ENCODE measurements at regions of chr12 and their contacts with region 1.

Region 1: DNA sequence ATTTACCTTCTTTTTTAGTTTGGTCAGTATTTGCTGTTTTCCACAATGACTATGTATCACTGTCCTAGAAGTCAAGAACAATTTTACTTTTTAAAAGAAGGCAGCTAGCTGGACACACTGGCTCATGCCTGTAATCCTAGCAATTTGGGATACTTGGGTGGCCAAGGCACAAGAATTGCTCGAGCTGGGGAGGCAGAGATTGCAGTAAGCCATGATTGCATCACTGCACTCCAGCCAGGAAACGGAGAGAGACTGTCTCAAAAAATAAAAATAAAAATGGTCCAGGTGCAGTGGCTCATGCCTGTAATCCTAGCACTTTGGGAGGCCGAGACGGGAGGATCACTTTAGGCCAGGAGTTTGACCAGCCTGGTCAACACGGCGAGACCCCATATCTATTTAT is 28.3 kb downstream of the MDM1 start:
- DNase-seq: no peak
- H3K4me3 ChIP-seq: no peak overlapping the region
- H3K27ac ChIP-seq: no peak overlapping the region
- H3K4me1 ChIP-seq: no peaks in the 10 kb centered on the region
- H3K27me3 ChIP-seq: no peaks in the 10 kb centered on the region
- CTCF ChIP-seq: no peak
- POLR2A ChIP-seq: no peak

Region 2: GRCh38 chr12:67747869-67748742 is 555.7 kb before region 1 on chr12:
- intact Hi-C with region 1: no loop called
- DNase-seq: no peak
- H3K4me3 ChIP-seq: no peak overlapping the region
- H3K27ac ChIP-seq: no peak overlapping the region
- H3K4me1 ChIP-seq: no peaks in the 10 kb centered on the region
- H3K27me3 ChIP-seq: no peaks in the 10 kb centered on the region
- CTCF ChIP-seq: no peak
- POLR2A ChIP-seq: no peak

Region 3: DNA sequence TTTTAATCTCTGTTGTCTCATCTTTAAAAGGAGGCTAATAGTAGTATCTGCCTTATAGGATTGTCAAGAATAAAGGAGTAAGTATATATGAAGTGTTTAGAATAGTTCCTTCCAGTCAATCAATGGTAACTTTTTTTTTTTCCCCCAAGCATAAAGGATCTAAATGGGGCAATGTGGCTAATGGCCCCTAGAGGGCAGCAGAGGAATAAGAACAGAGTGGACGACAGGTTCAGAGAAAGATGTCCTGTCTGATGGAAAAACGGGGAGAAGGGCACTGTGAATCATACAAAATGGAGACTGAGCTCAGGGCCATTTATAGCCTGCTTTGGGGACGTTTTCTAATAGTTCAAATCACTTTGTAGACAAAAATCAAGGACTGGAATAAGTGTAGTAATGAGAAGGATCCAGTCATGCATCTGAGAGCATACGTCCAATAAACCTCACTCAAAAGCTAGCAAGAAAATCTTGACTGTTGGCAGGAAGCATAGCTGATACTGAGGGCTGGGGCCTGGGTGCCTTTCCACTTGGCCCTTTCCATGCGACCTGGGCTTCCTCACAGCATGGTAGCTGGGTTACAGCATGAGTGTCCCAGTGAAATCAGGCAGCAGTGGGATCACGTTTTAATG is 263.3 kb before region 1 on chr12:
- intact Hi-C with region 1: loop called (anchors 10 kb)
- DNase-seq: no peak
- H3K4me3 ChIP-seq: no peak overlapping the region
- H3K27ac ChIP-seq: no peak overlapping the region
- H3K4me1 ChIP-seq: peaks cover 0 to 20% (median 2%) of the 10 kb centered on the region in 6 donors
- H3K27me3 ChIP-seq: no peaks in the 10 kb centered on the region
- CTCF ChIP-seq: peak; percentile 69 to 90 (median 83)
- POLR2A ChIP-seq: no peak

Region 4: DNA sequence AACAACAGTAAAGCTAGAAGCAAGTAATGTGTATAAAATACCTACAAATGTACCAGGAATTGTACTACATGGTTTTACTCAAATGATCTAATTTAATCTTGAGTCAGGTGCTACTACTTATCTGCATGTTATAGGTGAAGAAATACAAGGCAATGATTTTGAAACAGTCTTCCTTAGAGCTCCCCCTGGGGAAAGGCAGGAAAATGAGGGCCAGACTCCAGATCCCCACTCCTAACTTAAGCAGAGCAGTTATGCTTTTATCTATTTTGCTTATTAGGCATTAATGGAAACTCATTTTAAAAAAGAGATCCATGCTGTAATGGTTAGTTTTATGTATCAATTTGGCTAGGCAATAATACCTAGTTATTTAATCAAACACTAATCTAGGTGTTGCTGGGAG is 826.2 kb after region 1 on chr12:
- intact Hi-C with region 1: no loop called
- DNase-seq: no peak
- H3K4me3 ChIP-seq: no peak overlapping the region
- H3K27ac ChIP-seq: no peak overlapping the region
- H3K4me1 ChIP-seq: no peaks in the 10 kb centered on the region
- H3K27me3 ChIP-seq: no peaks in the 10 kb centered on the region
- CTCF ChIP-seq: no peak
- POLR2A ChIP-seq: no peak

Measured in spleen (tissue), 13 donors.